Activated CD8-positive, alpha-beta T cell treated with anti-CD3 and anti-CD28 coated beads for 36 hours (primary cell): ENCODE measurements at regions of chr1 and their contacts with region 1.

Region 1: DNA sequence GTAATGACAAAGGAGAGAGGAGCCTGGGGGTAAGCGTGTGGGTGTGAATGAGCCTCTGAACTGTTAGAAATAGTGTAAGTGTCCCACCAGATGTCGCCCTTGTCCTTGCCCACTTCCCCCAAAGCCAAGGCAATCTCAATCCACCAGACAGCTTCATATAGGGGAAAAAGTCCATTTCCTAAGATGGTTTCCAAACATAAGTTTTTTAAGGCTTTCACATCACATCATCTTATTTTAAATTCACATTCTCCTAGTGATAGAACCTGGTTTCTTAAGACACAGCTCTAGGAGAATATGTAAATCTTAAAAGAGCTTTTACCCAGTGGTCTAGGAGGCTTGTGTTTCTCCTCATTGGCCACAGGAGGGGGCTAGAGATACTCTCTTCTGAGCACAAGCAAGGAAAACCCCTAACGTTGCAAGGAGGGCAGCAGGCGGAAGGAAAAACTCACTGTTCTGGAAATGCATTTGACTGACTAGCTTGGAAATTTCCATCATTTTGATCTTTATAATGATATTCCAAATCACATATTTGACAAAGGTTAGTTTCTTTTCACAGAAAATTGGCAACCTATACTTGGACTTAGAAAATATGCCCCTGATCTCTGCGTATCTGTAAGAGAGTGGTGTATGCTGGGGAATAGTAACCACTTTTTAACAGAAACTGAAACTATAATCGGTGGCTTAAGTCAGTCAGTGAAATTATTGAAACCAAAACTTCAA is 51.9 kb upstream of the LPAR3 start:
- DNase-seq: peak; percentile 84
- ATAC-seq: peak; percentile 94
- H3K4me3 Mint-ChIP-seq: peak overlapping the region; percentile 76
- H3K27ac Mint-ChIP-seq: peak overlapping the region; percentile 95
- H3K4me1 Mint-ChIP-seq: peaks cover 16% of the 10 kb centered on the region
- H3K27me3 Mint-ChIP-seq: no peaks in the 10 kb centered on the region
- CTCF ChIP-seq: peak; percentile 95

Region 2: GRCh38 chr1:84959294-84959693 is 14.4 kb after region 1 on chr1:
- CTCF ChIA-PET with region 1: interaction called, 61 read pairs
- POLR2A ChIA-PET with region 1: interaction called, 4 read pairs
- intact Hi-C with region 1: loop called (anchors 1 kb)
- DNase-seq: peak; percentile 77
- ATAC-seq: peak; percentile 96
- H3K4me3 Mint-ChIP-seq: no peak overlapping the region
- H3K27ac Mint-ChIP-seq: peak overlapping the region; percentile 31
- H3K4me1 Mint-ChIP-seq: peaks cover 13% of the 10 kb centered on the region
- H3K27me3 Mint-ChIP-seq: no peaks in the 10 kb centered on the region
- CTCF ChIP-seq: no peak

Region 3: DNA sequence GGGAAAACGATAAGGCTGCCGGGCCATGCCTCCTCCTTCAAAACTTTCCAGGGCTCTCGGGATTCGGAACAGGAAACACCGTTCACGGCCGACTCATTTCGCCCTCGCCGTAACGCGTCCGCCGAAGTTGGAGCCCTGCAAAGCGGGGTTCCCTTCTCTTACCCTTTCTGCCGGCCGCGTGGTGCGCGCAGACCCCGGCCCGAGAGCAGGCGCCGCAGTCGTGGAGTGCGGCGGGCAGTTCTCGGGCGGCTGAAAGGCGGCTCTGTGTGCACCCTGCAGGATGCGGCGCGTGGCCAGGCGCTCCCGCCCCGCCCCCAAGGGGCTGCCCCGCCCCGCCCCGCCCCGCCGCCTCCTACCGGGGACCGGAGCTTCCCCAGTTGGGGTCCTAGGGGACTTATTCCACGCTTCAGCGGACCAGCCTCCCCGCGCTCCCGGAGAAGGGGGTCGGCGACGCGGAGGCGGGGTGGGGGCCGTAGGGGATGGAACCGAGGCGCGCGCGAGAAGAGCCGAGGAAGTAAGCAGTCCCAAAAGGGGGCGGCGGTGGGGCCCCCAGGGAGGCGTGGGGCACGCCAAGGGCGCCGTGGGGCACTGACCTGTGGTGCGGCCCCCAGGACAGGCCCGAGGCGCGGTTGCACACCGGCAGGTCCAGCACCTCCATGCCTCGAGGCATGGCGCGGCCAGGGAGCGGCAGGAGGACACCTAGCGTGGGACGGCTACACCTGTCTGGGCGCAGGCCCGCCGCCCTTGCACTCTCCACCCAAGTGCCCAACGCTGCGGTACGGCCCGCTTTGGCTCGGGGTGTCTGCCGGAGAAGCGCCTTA is 52.1 kb after region 1 on chr1 and contains the start of gene MCOLN2:
- CTCF ChIA-PET with region 1: interaction called, 37 read pairs
- POLR2A ChIA-PET with region 1: interaction called, 5 read pairs
- intact Hi-C with region 1: loop called (anchors 2 kb)
- DNase-seq: peak; percentile 57
- ATAC-seq: peak; percentile 77
- H3K4me3 Mint-ChIP-seq: peak within 1 kb of the TSS; percentile 77
- H3K27ac Mint-ChIP-seq: peak within 1 kb of the TSS; percentile 78
- H3K4me1 Mint-ChIP-seq: peaks cover 35% of the 10 kb centered on the region
- H3K27me3 Mint-ChIP-seq: peaks cover 19% of the 10 kb centered on the region
- CTCF ChIP-seq: no peak
- total RNA-seq, gene MCOLN2: 15.7 to 17.8 TPM

Region 4: GRCh38 chr1:85033221-85033620 is 88.3 kb after region 1 on chr1:
- CTCF ChIA-PET with region 1: interaction called, 133 read pairs
- POLR2A ChIA-PET with region 1: interaction called, 6 read pairs
- intact Hi-C with region 1: no loop called
- DNase-seq: no peak
- ATAC-seq: no peak
- H3K4me3 Mint-ChIP-seq: no peak overlapping the region
- H3K27ac Mint-ChIP-seq: no peak overlapping the region
- H3K4me1 Mint-ChIP-seq: no peaks in the 10 kb centered on the region
- H3K27me3 Mint-ChIP-seq: peaks cover 3% of the 10 kb centered on the region
- CTCF ChIP-seq: no peak

Region 5: GRCh38 chr1:85061711-85062424 is 116.9 kb after region 1 on chr1:
- CTCF ChIA-PET with region 1: interaction called, 15 read pairs
- POLR2A ChIA-PET with region 1: no interaction called
- intact Hi-C with region 1: no loop called
- DNase-seq: peak; percentile 93
- ATAC-seq: peak; percentile 100
- H3K4me3 Mint-ChIP-seq: peak overlapping the region; percentile 76
- H3K27ac Mint-ChIP-seq: peak overlapping the region; percentile 78
- H3K4me1 Mint-ChIP-seq: peaks cover 12% of the 10 kb centered on the region
- H3K27me3 Mint-ChIP-seq: peaks cover 5% of the 10 kb centered on the region
- CTCF ChIP-seq: no peak

Region 6: DNA sequence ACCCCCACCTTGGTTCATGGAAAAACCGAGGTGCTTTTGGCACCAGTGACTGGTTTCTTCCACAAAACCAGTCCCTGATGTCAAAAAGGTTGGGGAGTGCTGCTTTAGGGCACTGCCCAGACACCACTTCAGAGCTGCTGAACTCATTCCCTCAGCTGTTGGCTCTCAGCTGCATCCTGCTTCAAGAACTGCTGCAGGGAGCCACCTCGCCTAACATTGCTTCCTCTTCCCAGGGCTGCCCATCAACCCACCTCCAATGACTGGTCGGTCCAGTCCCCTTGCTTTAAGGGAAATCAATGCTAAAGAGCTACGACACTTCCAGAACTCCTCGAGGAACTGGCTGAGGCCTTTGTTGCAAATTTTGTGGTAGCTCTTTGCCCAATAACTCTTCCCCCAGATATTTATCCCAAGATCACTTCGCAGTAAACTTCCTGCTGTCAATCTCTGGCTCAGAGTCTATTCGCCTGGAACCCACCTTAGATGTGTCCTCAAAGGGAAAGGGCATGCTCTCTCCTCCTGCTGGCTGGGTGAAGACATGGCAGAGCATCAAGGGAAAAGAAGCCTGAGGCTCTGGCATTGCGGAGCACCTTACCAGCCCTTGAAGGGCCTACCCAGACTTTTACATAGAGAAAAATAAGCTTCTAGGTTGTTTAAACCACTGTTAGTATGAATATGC is 285.5 kb after region 1 on chr1:
- CTCF ChIA-PET with region 1: interaction called, 21 read pairs
- POLR2A ChIA-PET with region 1: interaction called, 3 read pairs
- intact Hi-C with region 1: no loop called
- DNase-seq: peak; percentile 14
- ATAC-seq: peak; percentile 49
- H3K4me3 Mint-ChIP-seq: no peak overlapping the region
- H3K27ac Mint-ChIP-seq: no peak overlapping the region
- H3K4me1 Mint-ChIP-seq: no peaks in the 10 kb centered on the region
- H3K27me3 Mint-ChIP-seq: no peaks in the 10 kb centered on the region
- CTCF ChIP-seq: peak; percentile 18

Region 7: GRCh38 chr1:85276215-85276977 is 331.5 kb after region 1 on chr1 and contains the start of gene BCL10:
- CTCF ChIA-PET with region 1: interaction called, 17 read pairs
- POLR2A ChIA-PET with region 1: no interaction called
- intact Hi-C with region 1: no loop called
- DNase-seq: peak; percentile 98
- ATAC-seq: peak; percentile 97
- H3K4me3 Mint-ChIP-seq: peak within 1 kb of the TSS; percentile 86
- H3K27ac Mint-ChIP-seq: peak within 1 kb of the TSS; percentile 91
- H3K4me1 Mint-ChIP-seq: peaks cover 51% of the 10 kb centered on the region
- H3K27me3 Mint-ChIP-seq: no peaks in the 10 kb centered on the region
- CTCF ChIP-seq: no peak
- total RNA-seq, gene BCL10: 30.6 to 32.3 TPM